MCF 10A (cell line): ENCODE measurements at regions of chr6 and their contacts with region 1.

Region 1: GRCh38 chr6:160455541-160456213 is 107.5 kb downstream of the SLC22A3 start:
- DNase-seq: peak; percentile 66
- H3K4me3 Mint-ChIP-seq: no peak overlapping the region
- H3K27ac Mint-ChIP-seq: no peak overlapping the region
- H3K4me1 Mint-ChIP-seq: no peaks in the 10 kb centered on the region
- H3K27me3 Mint-ChIP-seq: no peaks in the 10 kb centered on the region
- CTCF ChIP-seq: peak; percentile 99

Region 2: GRCh38 chr6:160088069-160088783 is 367.5 kb before region 1 on chr6:
- CTCF ChIA-PET with region 1: interaction called, 52 read pairs
- POLR2A ChIA-PET with region 1: interaction called, 4 read pairs
- intact Hi-C with region 1: loop called (anchors 1 kb)
- DNase-seq: peak; percentile 76
- H3K4me3 Mint-ChIP-seq: no peak overlapping the region
- H3K27ac Mint-ChIP-seq: no peak overlapping the region
- H3K4me1 Mint-ChIP-seq: no peaks in the 10 kb centered on the region
- H3K27me3 Mint-ChIP-seq: no peaks in the 10 kb centered on the region
- CTCF ChIP-seq: peak; percentile 68

Region 3: DNA sequence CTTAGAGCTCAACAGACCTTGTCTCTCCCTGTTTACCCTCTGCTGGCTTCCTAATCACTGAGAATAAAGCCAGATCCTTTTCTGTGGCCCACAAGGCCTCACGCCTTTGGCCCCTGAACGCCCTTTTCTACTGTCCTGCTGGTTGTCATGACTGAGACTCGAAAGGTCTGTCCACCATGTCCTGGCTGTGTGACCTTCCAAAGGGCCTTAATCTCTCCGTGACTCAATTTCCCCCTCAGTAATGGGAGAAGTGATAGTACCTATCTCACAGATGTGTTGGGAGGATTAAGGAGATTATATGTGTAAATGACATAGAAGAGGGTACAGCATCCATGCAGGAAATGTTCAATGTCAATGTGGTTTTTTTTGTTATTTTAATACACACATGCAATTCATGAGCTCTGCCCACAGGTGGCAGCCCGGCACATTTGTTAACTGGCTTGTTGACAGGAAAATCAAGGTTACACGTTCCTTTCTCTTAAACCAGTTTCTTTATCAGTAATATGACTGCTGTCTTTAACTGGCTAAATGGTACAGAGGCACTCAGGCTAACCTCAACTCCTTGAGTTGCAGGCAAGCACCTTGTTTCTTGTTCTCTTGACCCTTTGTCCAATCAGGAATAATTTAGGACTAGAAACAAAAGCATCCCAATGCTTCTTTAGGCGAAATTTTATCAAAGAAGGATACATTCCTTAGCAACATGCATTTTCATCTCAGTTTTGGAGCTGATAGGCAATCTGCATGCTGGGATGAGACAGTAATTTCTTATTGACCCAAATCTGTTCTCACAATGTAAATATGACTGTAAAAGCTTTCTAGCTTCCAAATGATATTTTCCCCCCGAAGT is 317.5 kb before region 1 on chr6:
- CTCF ChIA-PET with region 1: interaction called, 91 read pairs
- POLR2A ChIA-PET with region 1: interaction called, 6 read pairs
- intact Hi-C with region 1: loop called (anchors 1 kb)
- DNase-seq: peak; percentile 73
- H3K4me3 Mint-ChIP-seq: no peak overlapping the region
- H3K27ac Mint-ChIP-seq: no peak overlapping the region
- H3K4me1 Mint-ChIP-seq: peaks cover 25% of the 10 kb centered on the region
- H3K27me3 Mint-ChIP-seq: no peaks in the 10 kb centered on the region
- CTCF ChIP-seq: peak; percentile 80

Region 4: GRCh38 chr6:160221423-160221822 is 234.3 kb before region 1 on chr6:
- CTCF ChIA-PET with region 1: interaction called, 115 read pairs
- POLR2A ChIA-PET with region 1: interaction called, 16 read pairs
- intact Hi-C with region 1: loop called (anchors 1 kb)
- DNase-seq: peak; percentile 54
- H3K4me3 Mint-ChIP-seq: no peak overlapping the region
- H3K27ac Mint-ChIP-seq: no peak overlapping the region
- H3K4me1 Mint-ChIP-seq: no peaks in the 10 kb centered on the region
- H3K27me3 Mint-ChIP-seq: peaks cover 17% of the 10 kb centered on the region
- CTCF ChIP-seq: peak; percentile 28

Region 5: DNA sequence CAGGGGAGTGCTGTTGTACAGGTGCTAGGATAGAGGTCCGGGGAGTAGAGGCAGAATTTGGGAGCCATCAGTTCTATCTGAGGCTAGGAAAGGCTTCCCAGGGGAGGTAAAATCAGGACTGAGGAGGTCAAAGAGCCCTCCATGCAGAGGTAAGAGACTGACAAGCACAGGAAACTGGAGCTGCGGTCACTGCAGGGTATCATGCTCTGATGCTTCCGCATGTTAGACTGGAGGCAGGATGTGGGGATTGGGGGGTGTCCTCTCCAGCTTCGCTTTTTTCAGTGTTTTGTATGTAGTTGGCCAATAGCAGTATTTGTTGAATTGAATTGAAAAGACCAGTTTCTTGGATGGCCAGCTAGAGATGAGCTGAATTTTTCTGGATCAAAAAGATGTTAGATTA is 19.7 kb before region 1 on chr6:
- CTCF ChIA-PET with region 1: interaction called, 12 read pairs
- POLR2A ChIA-PET with region 1: no interaction called
- intact Hi-C with region 1: no loop called
- DNase-seq: no peak
- H3K4me3 Mint-ChIP-seq: no peak overlapping the region
- H3K27ac Mint-ChIP-seq: no peak overlapping the region
- H3K4me1 Mint-ChIP-seq: no peaks in the 10 kb centered on the region
- H3K27me3 Mint-ChIP-seq: no peaks in the 10 kb centered on the region
- CTCF ChIP-seq: no peak